ENCODE measurements at regions of chr5 and their contacts with region 1.

Region 1: DNA sequence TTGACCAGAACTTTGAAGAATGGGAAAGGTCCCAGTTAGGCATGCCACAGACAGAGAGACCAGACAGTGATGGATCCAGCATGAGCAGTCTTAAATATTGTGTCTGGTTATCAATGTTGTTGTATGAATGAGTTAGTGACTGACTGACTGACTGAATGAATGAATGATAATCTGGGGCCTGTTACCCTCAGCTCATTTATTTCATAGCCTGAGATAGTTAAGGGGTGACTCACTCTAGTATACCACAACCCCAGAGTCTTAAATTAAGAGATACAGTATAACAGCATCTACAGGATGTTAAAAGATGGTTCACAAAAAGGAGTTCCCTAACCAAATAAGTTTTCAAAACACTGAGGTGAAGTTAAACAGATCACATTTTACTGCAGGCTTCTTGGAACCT is 133.5 kb downstream of the SGCD start:
- DNase-seq: no peak
- H3K4me3 ChIP-seq: no peak overlapping the region
- H3K27ac ChIP-seq: no peak overlapping the region
- H3K4me1 ChIP-seq: peaks cover 0 to 6% (median 0%) of the 10 kb centered on the region in 4 donors
- H3K27me3 ChIP-seq: no peaks in the 10 kb centered on the region
- CTCF ChIP-seq: no peak
- EP300 ChIP-seq: no peak
- POLR2A ChIP-seq: no peak

Region 2: DNA sequence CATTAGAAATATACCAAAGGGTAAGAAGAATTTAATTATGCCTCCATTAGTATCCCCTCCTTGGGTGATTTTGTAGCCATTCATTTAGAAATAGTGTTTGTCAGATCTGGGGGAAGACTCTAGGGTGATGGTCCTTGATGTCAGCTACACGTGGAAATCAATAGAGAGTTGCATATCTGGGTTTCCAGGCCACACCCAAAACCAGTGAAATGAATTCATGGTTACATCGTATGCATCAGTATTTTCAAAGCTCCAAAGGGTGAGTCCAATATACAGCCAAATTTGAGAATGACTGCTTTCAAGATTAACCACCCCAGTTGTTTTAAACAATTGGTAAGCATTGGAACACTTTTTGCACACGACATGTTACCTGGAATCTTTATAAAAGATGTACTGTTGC is 306.9 kb before region 1 on chr5:
- in situ Hi-C with region 1: no loop called
- intact Hi-C with region 1: loop called (anchors 5 kb)
- DNase-seq: no peak
- H3K4me3 ChIP-seq: no peak overlapping the region
- H3K27ac ChIP-seq: no peak overlapping the region
- H3K4me1 ChIP-seq: no peaks in the 10 kb centered on the region
- H3K27me3 ChIP-seq: no peaks in the 10 kb centered on the region
- CTCF ChIP-seq: no peak
- EP300 ChIP-seq: no peak
- POLR2A ChIP-seq: no peak

Region 3: DNA sequence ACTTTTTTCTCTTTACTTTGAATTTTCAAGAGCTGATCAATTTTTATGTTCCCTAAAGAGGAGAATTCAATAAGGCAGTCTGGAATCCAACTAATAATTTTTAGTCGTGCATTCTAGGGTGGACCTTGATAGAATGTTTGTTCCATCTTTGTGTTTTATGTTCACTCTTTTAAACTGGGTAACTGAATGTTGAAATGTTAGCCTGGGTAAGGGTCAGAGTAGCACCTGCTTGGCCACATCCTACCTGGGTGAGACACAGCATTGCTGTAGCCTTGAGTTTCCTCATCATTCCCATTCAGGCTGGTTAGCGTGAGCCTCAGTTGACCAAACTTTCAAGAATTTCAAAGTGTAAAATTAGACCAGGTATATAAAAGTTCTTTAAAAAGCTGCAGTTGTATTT is 48.5 kb before region 1 on chr5:
- in situ Hi-C with region 1: no loop called
- intact Hi-C with region 1: loop called (anchors 2 kb)
- DNase-seq: no peak
- H3K4me3 ChIP-seq: no peak overlapping the region
- H3K27ac ChIP-seq: peak overlapping the region; percentile 41 to 72 (median 68)
- H3K4me1 ChIP-seq: peaks cover 0 to 10% (median 0%) of the 10 kb centered on the region in 4 donors
- H3K27me3 ChIP-seq: no peaks in the 10 kb centered on the region
- CTCF ChIP-seq: no peak
- EP300 ChIP-seq: no peak
- POLR2A ChIP-seq: no peak

Measured in transverse colon (tissue), 4 donors.